Caco-2 (cell line): ENCODE measurements at regions of chr20 and their contacts with region 1.

Region 1: GRCh38 chr20:48026991-48027503 is 241.8 kb upstream of the SULF2 start:
- DNase-seq: no peak
- H3K4me3 ChIP-seq: no peak overlapping the region
- H3K4me3 Mint-ChIP-seq: no peak overlapping the region
- H3K27ac Mint-ChIP-seq: no peak overlapping the region
- H3K4me1 ChIP-seq: no peaks in the 10 kb centered on the region
- H3K4me1 Mint-ChIP-seq: no peaks in the 10 kb centered on the region
- H3K27me3 ChIP-seq: peaks cover 1% of the 10 kb centered on the region; the same call in 1 of the 2 replicates
- H3K27me3 Mint-ChIP-seq: peaks cover 27% of the 10 kb centered on the region
- CTCF ChIP-seq: no peak

Region 2: GRCh38 chr20:47847868-47848531 is 179.0 kb before region 1 on chr20:
- CTCF ChIA-PET with region 1: no interaction called
- POLR2A ChIA-PET with region 1: no interaction called
- intact Hi-C with region 1: no loop called
- DNase-seq: no peak
- H3K4me3 ChIP-seq: no peak overlapping the region
- H3K4me3 Mint-ChIP-seq: no peak overlapping the region
- H3K27ac Mint-ChIP-seq: no peak overlapping the region
- H3K4me1 ChIP-seq: peaks cover 3% of the 10 kb centered on the region; the same call in 1 of the 2 replicates
- H3K4me1 Mint-ChIP-seq: peaks cover 7% of the 10 kb centered on the region
- H3K27me3 ChIP-seq: no peaks in the 10 kb centered on the region
- H3K27me3 Mint-ChIP-seq: peaks cover 12% of the 10 kb centered on the region
- CTCF ChIP-seq: no peak

Region 3: DNA sequence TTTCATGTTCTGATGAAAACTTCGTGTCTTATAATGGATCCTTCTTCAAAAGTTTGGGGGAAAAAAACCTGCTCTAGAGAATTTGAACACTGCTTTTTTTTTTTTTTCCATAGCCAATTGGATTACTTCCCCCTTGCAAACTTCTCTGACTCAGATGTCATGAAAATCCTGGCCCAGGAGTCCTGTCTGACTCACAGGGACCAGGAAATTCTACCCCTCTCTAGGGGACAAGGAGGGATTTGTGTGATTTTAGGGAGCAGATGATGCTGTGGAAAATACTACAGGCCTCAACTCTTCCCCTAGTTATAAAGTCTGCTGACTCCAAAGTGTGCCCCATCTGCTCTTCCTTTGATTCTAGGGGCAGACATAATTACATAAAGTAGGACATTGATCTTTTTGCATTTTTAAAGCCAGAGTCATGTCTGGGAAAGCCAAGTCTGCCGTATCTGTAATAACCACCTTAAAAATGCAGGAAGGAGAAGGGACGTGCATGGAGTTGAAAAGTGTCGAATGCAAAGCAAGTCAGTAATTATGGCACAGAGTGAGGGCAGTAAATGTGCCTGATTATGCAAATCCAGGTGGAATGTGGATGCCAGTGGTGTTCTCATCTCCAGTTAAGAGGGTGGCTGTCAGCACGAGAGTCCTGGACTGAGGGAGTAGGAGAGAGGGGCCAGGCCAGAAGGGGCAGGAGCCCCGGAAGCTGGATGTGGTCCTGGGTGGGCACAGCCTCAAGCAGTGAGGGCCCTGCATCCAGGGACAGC is 97.5 kb before region 1 on chr20:
- CTCF ChIA-PET with region 1: no interaction called
- POLR2A ChIA-PET with region 1: no interaction called
- intact Hi-C with region 1: no loop called
- DNase-seq: no peak
- H3K4me3 ChIP-seq: no peak overlapping the region
- H3K4me3 Mint-ChIP-seq: no peak overlapping the region
- H3K27ac Mint-ChIP-seq: no peak overlapping the region
- H3K4me1 ChIP-seq: no peaks in the 10 kb centered on the region
- H3K4me1 Mint-ChIP-seq: no peaks in the 10 kb centered on the region
- H3K27me3 ChIP-seq: no peaks in the 10 kb centered on the region; the same call in 1 of the 2 replicates
- H3K27me3 Mint-ChIP-seq: peaks cover 11% of the 10 kb centered on the region
- CTCF ChIP-seq: no peak

Region 4: GRCh38 chr20:48744515-48744914 is 717.5 kb after region 1 on chr20:
- CTCF ChIA-PET with region 1: interaction called, 13 read pairs
- POLR2A ChIA-PET with region 1: no interaction called
- intact Hi-C with region 1: no loop called
- DNase-seq: no peak
- H3K4me3 ChIP-seq: no peak overlapping the region
- H3K4me3 Mint-ChIP-seq: no peak overlapping the region
- H3K27ac Mint-ChIP-seq: no peak overlapping the region
- H3K4me1 ChIP-seq: no peaks in the 10 kb centered on the region
- H3K4me1 Mint-ChIP-seq: no peaks in the 10 kb centered on the region
- H3K27me3 ChIP-seq: no peaks in the 10 kb centered on the region
- H3K27me3 Mint-ChIP-seq: no peaks in the 10 kb centered on the region
- CTCF ChIP-seq: no peak